ENCODE measurements at regions of chr6 and their contacts with region 1.

Region 1: GRCh38 chr6:127855542-127856159 is 45.2 kb downstream of the THEMIS start:
- DNase-seq: peak in 4 of 5 donors; percentile 22 to 61 (median 44)
- H3K4me3 ChIP-seq: no peak overlapping the region
- H3K4me3 Mint-ChIP-seq: peak overlapping the region in 5 of 7 donors; percentile 12 to 52 (median 30)
- H3K27ac ChIP-seq: no peak overlapping the region
- H3K27ac Mint-ChIP-seq: peak overlapping the region; percentile 44 to 89 (median 75)
- H3K4me1 ChIP-seq: peaks cover 71% of the 10 kb centered on the region
- H3K4me1 Mint-ChIP-seq: peaks cover 72 to 99% (median 95%) of the 10 kb centered on the region in 3 donors
- H3K27me3 ChIP-seq: no peaks in the 10 kb centered on the region
- H3K27me3 Mint-ChIP-seq: no peaks in the 10 kb centered on the region

Region 2: GRCh38 chr6:127706216-127706615 is 149.4 kb before region 1 on chr6:
- CTCF ChIA-PET with region 1: no interaction called
- POLR2A ChIA-PET with region 1: no interaction called
- DNase-seq: no peak
- H3K4me3 ChIP-seq: no peak overlapping the region
- H3K4me3 Mint-ChIP-seq: no peak overlapping the region
- H3K27ac ChIP-seq: no peak overlapping the region
- H3K27ac Mint-ChIP-seq: no peak overlapping the region
- H3K4me1 ChIP-seq: no peaks in the 10 kb centered on the region
- H3K4me1 Mint-ChIP-seq: peaks cover 7 to 12% (median 9%) of the 10 kb centered on the region in 3 donors
- H3K27me3 ChIP-seq: no peaks in the 10 kb centered on the region
- H3K27me3 Mint-ChIP-seq: no peaks in the 10 kb centered on the region

Region 3: GRCh38 chr6:127737009-127737486 is 118.6 kb before region 1 on chr6:
- CTCF ChIA-PET with region 1: interaction called, 15 read pairs
- POLR2A ChIA-PET with region 1: no interaction called
- DNase-seq: peak in 4 of 5 donors; percentile 14 to 62 (median 55)
- H3K4me3 ChIP-seq: no peak overlapping the region
- H3K4me3 Mint-ChIP-seq: peak overlapping the region in 1 of 7 donors; percentile 30
- H3K27ac ChIP-seq: no peak overlapping the region
- H3K27ac Mint-ChIP-seq: peak overlapping the region in 6 of 8 donors; percentile 50 to 77 (median 58)
- H3K4me1 ChIP-seq: peaks cover 15% of the 10 kb centered on the region
- H3K4me1 Mint-ChIP-seq: peaks cover 46 to 80% (median 73%) of the 10 kb centered on the region in 3 donors
- H3K27me3 ChIP-seq: no peaks in the 10 kb centered on the region
- H3K27me3 Mint-ChIP-seq: no peaks in the 10 kb centered on the region

Region 4: GRCh38 chr6:127907960-127908640 is 52.4 kb after region 1 on chr6:
- CTCF ChIA-PET with region 1: interaction called, 10 read pairs
- POLR2A ChIA-PET with region 1: interaction called, 4 read pairs
- DNase-seq: peak in 2 of 5 donors; percentile 22 to 52
- H3K4me3 ChIP-seq: peak overlapping the region; percentile 52
- H3K4me3 Mint-ChIP-seq: peak overlapping the region; percentile 85 to 92 (median 89)
- H3K27ac ChIP-seq: peak overlapping the region; percentile 74
- H3K27ac Mint-ChIP-seq: peak overlapping the region; percentile 92 to 99 (median 95)
- H3K4me1 ChIP-seq: peaks cover 21% of the 10 kb centered on the region
- H3K4me1 Mint-ChIP-seq: peaks cover 62 to 88% (median 80%) of the 10 kb centered on the region in 3 donors
- H3K27me3 ChIP-seq: no peaks in the 10 kb centered on the region
- H3K27me3 Mint-ChIP-seq: no peaks in the 10 kb centered on the region

Region 5: GRCh38 chr6:127938701-127939100 is 83.0 kb after region 1 on chr6:
- CTCF ChIA-PET with region 1: interaction called, 10 read pairs
- POLR2A ChIA-PET with region 1: no interaction called
- DNase-seq: peak in 1 of 5 donors; percentile 20
- H3K4me3 ChIP-seq: no peak overlapping the region
- H3K4me3 Mint-ChIP-seq: peak overlapping the region in 4 of 7 donors; percentile 16 to 58 (median 32)
- H3K27ac ChIP-seq: peak overlapping the region; percentile 18
- H3K27ac Mint-ChIP-seq: peak overlapping the region in 7 of 8 donors; percentile 10 to 87 (median 27)
- H3K4me1 ChIP-seq: peaks cover 33% of the 10 kb centered on the region
- H3K4me1 Mint-ChIP-seq: peaks cover 50 to 66% (median 55%) of the 10 kb centered on the region in 3 donors
- H3K27me3 ChIP-seq: no peaks in the 10 kb centered on the region
- H3K27me3 Mint-ChIP-seq: no peaks in the 10 kb centered on the region

Region 6: DNA sequence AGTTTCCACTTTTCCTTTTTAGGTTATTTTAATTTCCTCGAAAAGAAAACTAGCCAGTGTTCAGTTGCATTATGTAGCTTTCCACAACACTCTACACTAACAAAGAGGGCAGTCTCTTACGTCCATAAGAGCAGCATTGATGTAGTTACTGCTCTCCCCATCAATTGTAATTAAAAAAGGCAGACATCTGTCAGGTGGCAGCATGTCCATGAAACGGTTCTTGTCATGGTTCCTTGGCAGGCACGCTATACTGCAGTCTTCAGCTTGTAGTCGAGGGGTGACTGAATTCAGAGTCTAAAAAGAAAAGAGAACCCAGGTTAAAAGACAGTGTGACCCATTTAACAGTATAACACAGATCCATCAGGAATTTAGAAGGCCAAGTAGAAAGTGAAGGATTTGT is 125.3 kb after region 1 on chr6:
- CTCF ChIA-PET with region 1: interaction called, 17 read pairs
- POLR2A ChIA-PET with region 1: no interaction called
- DNase-seq: no peak
- H3K4me3 ChIP-seq: no peak overlapping the region
- H3K4me3 Mint-ChIP-seq: peak overlapping the region; percentile 32 to 84 (median 72)
- H3K27ac ChIP-seq: no peak overlapping the region
- H3K27ac Mint-ChIP-seq: peak overlapping the region in 7 of 8 donors; percentile 20 to 91 (median 80)
- H3K4me1 ChIP-seq: no peaks in the 10 kb centered on the region
- H3K4me1 Mint-ChIP-seq: peaks cover 25 to 64% (median 53%) of the 10 kb centered on the region in 3 donors
- H3K27me3 ChIP-seq: no peaks in the 10 kb centered on the region
- H3K27me3 Mint-ChIP-seq: no peaks in the 10 kb centered on the region

Measured in CD8-positive, alpha-beta memory T cell (primary cell).